ENCODE measurements at regions of chr4 and their contacts with region 1.

Region 1: GRCh38 chr4:188372826-188373225 is 233.6 kb downstream of the TRIML1 start:
- DNase-seq: peak; percentile 88 to 90
- H3K4me3 ChIP-seq: no peak overlapping the region
- H3K4me3 Mint-ChIP-seq: no peak overlapping the region
- H3K27ac Mint-ChIP-seq: no peak overlapping the region
- H3K4me1 ChIP-seq: peaks cover 14% of the 10 kb centered on the region
- H3K4me1 Mint-ChIP-seq: peaks cover 3% of the 10 kb centered on the region
- H3K27me3 ChIP-seq: no peaks in the 10 kb centered on the region
- H3K27me3 Mint-ChIP-seq: no peaks in the 10 kb centered on the region
- CTCF ChIP-seq: peak; percentile 69 to 83

Region 2: GRCh38 chr4:187606581-187606980 is 766.2 kb before region 1 on chr4:
- CTCF ChIA-PET with region 1: no interaction called
- POLR2A ChIA-PET with region 1: no interaction called
- intact Hi-C with region 1: loop called (anchors 1 kb)
- DNase-seq: peak; percentile 38 to 48
- H3K4me3 ChIP-seq: no peak overlapping the region
- H3K4me3 Mint-ChIP-seq: no peak overlapping the region
- H3K27ac Mint-ChIP-seq: no peak overlapping the region
- H3K4me1 ChIP-seq: no peaks in the 10 kb centered on the region
- H3K4me1 Mint-ChIP-seq: no peaks in the 10 kb centered on the region
- H3K27me3 ChIP-seq: no peaks in the 10 kb centered on the region
- H3K27me3 Mint-ChIP-seq: no peaks in the 10 kb centered on the region
- CTCF ChIP-seq: peak; percentile 68 to 82

Region 3: GRCh38 chr4:187814737-187815465 is 557.9 kb before region 1 on chr4:
- CTCF ChIA-PET with region 1: no interaction called
- POLR2A ChIA-PET with region 1: no interaction called
- intact Hi-C with region 1: loop called (anchors 2 kb)
- DNase-seq: peak; percentile 82 to 84
- H3K4me3 ChIP-seq: peak overlapping the region; percentile 71
- H3K4me3 Mint-ChIP-seq: peak overlapping the region; percentile 94
- H3K27ac Mint-ChIP-seq: peak overlapping the region; percentile 98
- H3K4me1 ChIP-seq: 0 out of 2 replicates have a peak, but pooled peaks cover 8% of the 10 kb centered on the region
- H3K4me1 Mint-ChIP-seq: peaks cover 6% of the 10 kb centered on the region
- H3K27me3 ChIP-seq: no peaks in the 10 kb centered on the region
- H3K27me3 Mint-ChIP-seq: no peaks in the 10 kb centered on the region
- CTCF ChIP-seq: no peak

Region 4: GRCh38 chr4:188015025-188015778 is 357.6 kb before region 1 on chr4:
- CTCF ChIA-PET with region 1: no interaction called
- POLR2A ChIA-PET with region 1: no interaction called
- intact Hi-C with region 1: loop called (anchors 2 kb)
- DNase-seq: peak; percentile 69 to 79
- H3K4me3 ChIP-seq: no peak overlapping the region
- H3K4me3 Mint-ChIP-seq: peak overlapping the region; percentile 44
- H3K27ac Mint-ChIP-seq: peak overlapping the region; percentile 91
- H3K4me1 ChIP-seq: peaks cover 38% of the 10 kb centered on the region
- H3K4me1 Mint-ChIP-seq: peaks cover 28% of the 10 kb centered on the region
- H3K27me3 ChIP-seq: no peaks in the 10 kb centered on the region
- H3K27me3 Mint-ChIP-seq: no peaks in the 10 kb centered on the region
- CTCF ChIP-seq: no peak

Region 5: GRCh38 chr4:188168726-188169373 is 204.0 kb before region 1 on chr4:
- CTCF ChIA-PET with region 1: no interaction called
- POLR2A ChIA-PET with region 1: no interaction called
- intact Hi-C with region 1: loop called (anchors 10 kb)
- DNase-seq: no peak
- H3K4me3 ChIP-seq: no peak overlapping the region
- H3K4me3 Mint-ChIP-seq: no peak overlapping the region
- H3K27ac Mint-ChIP-seq: no peak overlapping the region
- H3K4me1 ChIP-seq: no peaks in the 10 kb centered on the region
- H3K4me1 Mint-ChIP-seq: no peaks in the 10 kb centered on the region
- H3K27me3 ChIP-seq: no peaks in the 10 kb centered on the region
- H3K27me3 Mint-ChIP-seq: no peaks in the 10 kb centered on the region
- CTCF ChIP-seq: no peak

Region 6: GRCh38 chr4:188396037-188396436 is 23.2 kb after region 1 on chr4:
- CTCF ChIA-PET with region 1: no interaction called
- POLR2A ChIA-PET with region 1: no interaction called
- intact Hi-C with region 1: no loop called
- DNase-seq: no peak
- H3K4me3 ChIP-seq: no peak overlapping the region
- H3K4me3 Mint-ChIP-seq: no peak overlapping the region
- H3K27ac Mint-ChIP-seq: no peak overlapping the region
- H3K4me1 ChIP-seq: peaks cover 16% of the 10 kb centered on the region
- H3K4me1 Mint-ChIP-seq: peaks cover 10% of the 10 kb centered on the region
- H3K27me3 ChIP-seq: no peaks in the 10 kb centered on the region
- H3K27me3 Mint-ChIP-seq: no peaks in the 10 kb centered on the region
- CTCF ChIP-seq: no peak

Region 7: DNA sequence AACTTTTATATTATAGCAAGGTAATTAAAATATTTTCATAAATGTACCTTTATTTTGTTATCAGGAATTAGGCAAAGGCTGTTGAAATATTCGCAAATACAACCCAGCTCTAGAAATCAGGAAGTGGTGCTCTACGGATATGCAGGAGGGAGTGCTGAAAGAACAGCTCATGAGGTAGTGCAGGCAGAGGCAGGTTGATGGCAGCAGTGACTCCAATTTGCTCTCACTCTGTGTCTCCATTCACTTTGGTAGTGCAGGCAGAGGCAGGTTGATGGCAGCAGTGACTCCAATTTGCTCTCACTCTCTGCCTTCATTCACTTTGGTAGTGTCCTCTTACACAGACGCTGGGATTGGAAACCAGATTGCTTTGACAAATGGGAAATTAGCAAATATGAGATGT is 44.4 kb after region 1 on chr4:
- CTCF ChIA-PET with region 1: no interaction called
- POLR2A ChIA-PET with region 1: no interaction called
- intact Hi-C with region 1: no loop called
- DNase-seq: peak; percentile 39 to 50
- H3K4me3 ChIP-seq: no peak overlapping the region
- H3K4me3 Mint-ChIP-seq: no peak overlapping the region
- H3K27ac Mint-ChIP-seq: no peak overlapping the region
- H3K4me1 ChIP-seq: no peaks in the 10 kb centered on the region
- H3K4me1 Mint-ChIP-seq: no peaks in the 10 kb centered on the region
- H3K27me3 ChIP-seq: no peaks in the 10 kb centered on the region
- H3K27me3 Mint-ChIP-seq: no peaks in the 10 kb centered on the region
- CTCF ChIP-seq: peak; percentile 12 to 31

Region 8: DNA sequence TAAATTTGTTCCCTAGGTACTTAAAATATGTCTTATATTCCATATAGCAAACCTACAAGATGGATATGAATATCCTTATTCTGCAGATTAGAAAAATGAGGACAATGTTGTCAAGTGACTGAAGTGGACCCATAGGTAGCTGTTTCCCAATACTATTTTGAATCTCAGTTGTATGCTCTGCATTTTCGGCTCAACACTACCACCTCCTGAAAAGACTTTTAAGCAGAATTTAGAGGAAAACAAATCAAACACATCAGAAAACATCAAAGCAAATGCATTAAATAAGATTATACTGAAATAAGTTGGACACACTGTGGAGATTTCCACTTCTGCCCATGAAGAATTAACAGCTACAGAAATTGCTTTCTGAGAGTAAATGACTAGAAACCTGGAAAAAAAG is 255.1 kb after region 1 on chr4:
- CTCF ChIA-PET with region 1: no interaction called
- POLR2A ChIA-PET with region 1: no interaction called
- intact Hi-C with region 1: loop called (anchors 1 kb)
- DNase-seq: no peak
- H3K4me3 ChIP-seq: no peak overlapping the region
- H3K4me3 Mint-ChIP-seq: no peak overlapping the region
- H3K27ac Mint-ChIP-seq: no peak overlapping the region
- H3K4me1 ChIP-seq: no peaks in the 10 kb centered on the region
- H3K4me1 Mint-ChIP-seq: peaks cover 6% of the 10 kb centered on the region
- H3K27me3 ChIP-seq: no peaks in the 10 kb centered on the region
- H3K27me3 Mint-ChIP-seq: no peaks in the 10 kb centered on the region
- CTCF ChIP-seq: no peak

Measured in Caco-2 (cell line).